ENCODE measurements at regions of chr6 and their contacts with region 1.

Region 1: GRCh38 chr6:28355743-28356665 is 6.3 kb downstream of the ZKSCAN3 start:
- DNase-seq: peak; percentile 63 to 90
- ATAC-seq: peak; percentile 85 to 93 (median 90)
- H3K4me3 ChIP-seq: peak overlapping the region; percentile 50 to 90 (median 65)
- H3K27ac ChIP-seq: peak overlapping the region; percentile 68 to 94 (median 84)
- H3K4me1 ChIP-seq: peaks cover 9 to 36% (median 30%) of the 10 kb centered on the region in 9 donors
- H3K27me3 ChIP-seq: no peaks in the 10 kb centered on the region
- CTCF ChIP-seq: peak; percentile 66 to 84 (median 79)

Region 2: DNA sequence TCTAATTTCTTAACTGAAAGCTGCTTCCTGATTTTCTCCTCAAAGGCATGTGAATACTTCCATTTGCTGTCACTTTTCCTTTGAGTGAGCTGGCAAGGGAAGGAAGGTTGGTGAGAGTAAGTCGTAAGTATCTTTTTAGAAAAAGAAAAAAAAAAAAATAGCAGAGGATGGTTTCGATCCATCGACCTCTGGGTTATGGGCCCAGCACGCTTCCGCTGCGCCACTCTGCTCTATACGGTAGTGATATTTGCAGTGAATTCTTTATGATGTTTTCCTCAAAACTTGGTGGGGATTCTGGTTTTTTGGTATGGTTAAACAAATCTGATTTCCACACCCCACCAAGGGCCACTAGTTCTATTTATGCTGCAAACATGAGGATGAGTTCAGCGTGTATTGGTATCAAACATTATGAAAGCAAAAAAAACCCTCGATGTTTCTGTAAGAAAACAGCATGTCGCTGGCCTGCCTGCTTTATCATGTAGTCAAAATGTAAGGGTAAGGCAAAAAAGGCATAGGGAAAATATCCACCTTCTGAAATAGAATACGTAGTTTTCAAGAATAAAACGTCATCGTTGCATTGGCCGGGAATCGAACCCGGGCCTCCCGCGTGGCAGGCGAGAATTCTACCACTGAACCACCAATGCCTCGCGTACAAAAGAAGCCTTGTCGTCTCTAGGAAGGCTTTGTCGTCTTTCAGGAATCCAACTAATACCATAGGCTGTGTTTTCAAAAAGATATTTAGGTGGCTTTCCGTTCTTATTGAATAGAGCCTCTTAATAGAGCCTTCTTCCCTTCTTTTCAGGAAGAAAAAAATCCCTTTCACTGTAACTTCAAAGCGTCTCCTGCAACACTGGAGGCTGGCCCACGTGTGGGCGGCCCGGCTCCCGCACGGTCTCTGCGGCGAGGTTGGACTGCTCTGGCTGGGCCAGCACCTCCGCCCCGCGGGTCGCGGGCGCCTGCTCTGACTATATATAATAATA is 453.4 kb before region 1 on chr6:
- intact Hi-C with region 1: loop called in 1 of 10 experiments (anchors 10 kb)
- DNase-seq: peak; percentile 76 to 90
- ATAC-seq: peak; percentile 93 to 99 (median 96)
- H3K4me3 ChIP-seq: peak overlapping the region; percentile 31 to 64 (median 58)
- H3K27ac ChIP-seq: peak overlapping the region in 9 of 10 donors; percentile 12 to 79 (median 68)
- H3K4me1 ChIP-seq: peaks cover 0 to 13% (median 0%) of the 10 kb centered on the region in 9 donors
- H3K27me3 ChIP-seq: peaks cover 0 to 4% (median 0%) of the 10 kb centered on the region in 7 donors
- CTCF ChIP-seq: no peak

Region 3: DNA sequence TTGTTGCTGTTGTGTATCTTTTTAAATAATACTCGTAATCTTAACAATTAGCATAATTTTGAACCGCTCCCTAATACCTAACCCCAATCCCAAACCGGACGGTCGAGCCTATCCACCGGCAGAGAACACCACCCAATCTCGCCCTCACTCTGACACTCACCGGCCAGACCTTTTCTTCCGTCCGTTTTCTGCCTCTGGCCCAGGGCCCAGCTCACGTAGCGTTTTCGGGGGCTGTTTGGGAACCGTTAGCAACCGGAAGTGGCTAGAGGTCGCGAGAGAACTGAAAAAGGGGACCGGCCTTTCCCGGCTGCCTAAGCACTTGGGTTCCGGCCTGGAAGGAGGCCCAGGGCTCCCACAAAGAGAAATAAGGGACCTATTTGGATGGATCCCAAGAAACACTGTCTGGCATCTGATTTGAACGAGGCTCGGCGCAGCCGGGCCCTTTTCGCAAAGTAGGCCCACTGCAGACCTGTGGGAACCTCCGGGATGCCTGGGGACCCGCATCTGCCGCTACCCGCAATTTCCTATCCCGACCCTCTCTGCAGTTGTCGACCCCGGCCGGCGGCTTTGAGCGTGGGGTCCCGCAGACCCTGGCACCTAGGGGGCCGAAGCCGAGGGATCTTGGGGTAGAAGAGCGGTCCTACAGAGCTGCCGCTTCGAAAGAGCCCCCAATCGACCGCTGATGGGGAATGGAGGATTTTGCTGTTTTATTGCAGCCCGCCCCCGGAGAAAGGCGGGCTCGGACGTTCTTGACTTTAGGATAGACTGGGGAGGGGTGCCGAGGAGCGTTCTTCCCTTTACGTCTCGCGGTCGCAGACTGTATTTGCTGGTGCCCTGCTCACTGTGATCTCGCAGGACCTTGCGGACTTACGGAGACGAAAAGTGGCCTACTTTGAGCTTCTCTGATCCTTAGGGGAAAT is 219.2 kb before region 1 on chr6:
- intact Hi-C with region 1: loop called in 9 of 10 experiments (anchors 2 to 10 kb)
- DNase-seq: peak; percentile 88 to 94
- ATAC-seq: peak; percentile 92 to 96 (median 93)
- H3K4me3 ChIP-seq: peak overlapping the region; percentile 69 to 93 (median 78)
- H3K27ac ChIP-seq: peak overlapping the region; percentile 81 to 97 (median 94)
- H3K4me1 ChIP-seq: peaks cover 0 to 58% (median 24%) of the 10 kb centered on the region in 9 donors
- H3K27me3 ChIP-seq: no peaks in the 10 kb centered on the region
- CTCF ChIP-seq: no peak

Region 4: GRCh38 chr6:28225056-28225834 is 130.8 kb before region 1 on chr6 and contains the start of gene ZSCAN9:
- intact Hi-C with region 1: loop called in 4 of 10 experiments (anchors 1 to 10 kb)
- DNase-seq: peak; percentile 84 to 91
- ATAC-seq: peak; percentile 97 to 99 (median 98)
- H3K4me3 ChIP-seq: peak within 1 kb of the TSS; percentile 41 to 87 (median 78)
- H3K27ac ChIP-seq: peak within 1 kb of the TSS in 9 of 10 donors; percentile 67 to 88 (median 81)
- H3K4me1 ChIP-seq: peaks cover 3 to 29% (median 14%) of the 10 kb centered on the region in 9 donors
- H3K27me3 ChIP-seq: peaks cover 0 to 31% (median 21%) of the 10 kb centered on the region in 7 donors
- CTCF ChIP-seq: no peak
- total RNA-seq, gene ZSCAN9: 6.8 to 11.2 (median 8.8) TPM

Region 5: DNA sequence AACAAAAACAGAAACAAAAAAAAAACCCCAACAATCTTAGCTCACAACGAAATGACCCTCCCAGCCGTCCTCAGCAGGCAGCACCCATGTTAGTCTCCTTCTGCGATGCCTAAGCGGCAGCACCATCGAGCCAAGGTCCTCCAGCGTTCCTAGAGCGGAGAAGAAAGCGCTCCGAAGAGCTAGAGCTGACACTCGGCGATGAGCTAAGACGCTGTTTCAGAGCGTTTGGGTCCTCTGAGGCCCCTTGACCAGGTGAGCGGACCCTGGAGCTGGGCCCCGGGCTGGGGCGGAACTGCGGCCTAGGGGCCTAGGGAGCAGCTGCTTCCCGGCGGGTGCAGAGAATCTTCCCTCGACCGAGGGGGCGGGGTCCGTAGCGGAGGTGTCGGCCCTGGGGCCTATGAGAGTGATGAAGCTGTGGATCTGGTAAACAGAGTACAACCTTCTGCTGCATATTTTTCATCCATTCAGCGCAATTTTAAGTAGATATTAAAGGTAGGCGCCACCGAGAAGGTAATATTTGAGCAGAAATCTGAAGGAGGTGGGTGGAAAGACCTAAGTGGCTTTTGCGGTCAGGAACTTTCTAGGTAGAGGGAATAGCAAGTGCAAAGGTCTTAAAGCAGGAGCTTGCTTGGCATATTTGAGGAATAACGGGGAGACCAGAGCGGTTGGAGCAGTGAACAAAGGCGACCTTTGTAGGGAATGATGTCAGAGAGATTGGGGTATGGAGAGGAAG is 88.9 kb before region 1 on chr6 and contains the start of gene ZSCAN26:
- intact Hi-C with region 1: loop called in 4 of 10 experiments (anchors 5 to 10 kb)
- DNase-seq: peak; percentile 87 to 91
- ATAC-seq: peak; percentile 95 to 99 (median 98)
- H3K4me3 ChIP-seq: peak within 1 kb of the TSS; percentile 48 to 90 (median 80)
- H3K27ac ChIP-seq: peak within 1 kb of the TSS; percentile 67 to 97 (median 84)
- H3K4me1 ChIP-seq: peaks cover 0 to 37% (median 18%) of the 10 kb centered on the region in 9 donors
- H3K27me3 ChIP-seq: no peaks in the 10 kb centered on the region
- CTCF ChIP-seq: no peak
- total RNA-seq, gene ZSCAN26: 8.9 to 17.8 (median 12.8) TPM

Region 6: DNA sequence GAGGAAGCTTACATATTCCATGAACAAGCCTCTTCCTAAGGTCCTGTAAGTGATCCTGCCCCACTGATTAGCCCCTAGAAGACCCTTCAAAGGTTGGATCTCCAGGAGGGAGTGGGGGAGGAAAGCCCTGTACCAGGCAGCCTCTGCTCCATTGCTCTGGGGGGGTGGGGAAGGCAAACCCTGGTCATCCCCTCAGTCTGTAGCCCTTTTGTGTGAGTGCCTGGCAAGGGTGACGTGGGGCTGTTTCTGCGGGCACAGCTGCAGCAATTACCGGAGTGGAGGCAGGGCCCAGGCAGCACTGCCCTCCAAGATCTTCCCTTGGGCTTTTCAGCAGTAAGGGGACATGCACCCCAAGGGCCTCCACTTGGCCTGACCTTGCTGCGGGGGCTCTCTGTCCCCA is 1300.8 kb after region 1 on chr6 and contains the start of gene MOG:
- intact Hi-C with region 1: no loop called
- DNase-seq: no peak
- ATAC-seq: peak in 5 of 8 donors; percentile 8 to 46 (median 39)
- H3K4me3 ChIP-seq: no peak within 1 kb of the TSS
- H3K27ac ChIP-seq: peak within 1 kb of the TSS; percentile 76 to 90 (median 84)
- H3K4me1 ChIP-seq: peaks cover 0 to 32% (median 12%) of the 10 kb centered on the region in 9 donors
- H3K27me3 ChIP-seq: peaks cover 0 to 30% (median 0%) of the 10 kb centered on the region in 7 donors
- CTCF ChIP-seq: no peak
- total RNA-seq, gene MOG: 1.6 to 13.6 (median 3.2) TPM

Measured in heart right ventricle (tissue), 16 donors.